IMR-90 (cell line): ENCODE measurements at regions of chr6 and their contacts with region 1.

Region 1: GRCh38 chr6:167282165-167282564 is 8.9 kb upstream of the UNC93A start:
- DNase-seq: no peak
- ATAC-seq: no peak
- H3K4me3 ChIP-seq: no peak overlapping the region
- H3K27ac ChIP-seq: no peak overlapping the region
- H3K4me1 ChIP-seq: no peaks in the 10 kb centered on the region
- H3K27me3 ChIP-seq: no peaks in the 10 kb centered on the region
- CTCF ChIP-seq: no peak
- POLR2A ChIP-seq: no peak
- RAD21 ChIP-seq: no peak

Region 2: DNA sequence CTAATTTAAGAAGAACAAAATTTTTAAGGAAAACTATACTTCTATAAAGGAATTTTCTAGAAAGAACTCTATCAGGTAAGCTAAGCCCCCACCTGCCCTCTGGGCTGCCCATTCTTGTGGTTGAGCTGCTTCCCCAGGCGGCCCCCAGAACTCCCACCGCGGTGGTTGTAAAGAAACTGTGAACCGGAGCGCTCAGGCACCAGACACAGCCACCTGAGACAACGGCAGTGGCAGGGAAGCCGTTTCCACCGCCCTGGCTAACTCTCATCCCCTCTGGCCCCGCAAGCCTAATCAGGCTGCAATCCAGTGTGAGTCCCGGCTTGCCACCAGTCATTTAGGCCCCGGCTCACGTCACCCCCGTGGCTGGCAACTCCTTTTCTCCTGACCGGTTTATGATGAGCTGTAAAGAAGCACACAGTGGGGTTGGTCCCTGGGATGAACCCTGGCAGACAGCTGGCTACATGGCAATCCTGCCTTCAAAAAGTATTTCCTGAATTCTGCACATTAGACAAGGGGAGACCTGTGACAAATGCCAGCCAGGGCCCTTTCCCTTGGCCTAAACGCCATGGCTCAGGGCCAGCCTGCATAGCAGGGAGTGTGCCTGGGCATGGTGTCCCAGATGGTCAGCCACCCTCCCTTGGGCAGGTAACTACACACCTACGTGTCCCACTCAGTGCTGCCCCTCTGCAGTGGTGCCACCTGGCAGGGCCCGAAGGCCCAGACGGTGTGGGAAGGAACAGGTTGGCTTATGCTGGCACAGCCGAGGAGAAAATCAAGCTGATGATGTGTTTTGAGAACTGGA is 60.6 kb before region 1 on chr6:
- CTCF ChIA-PET with region 1: no interaction called
- POLR2A ChIA-PET with region 1: no interaction called
- dilution Hi-C with region 1: no loop called
- in situ Hi-C with region 1: no loop called
- intact Hi-C with region 1: loop called (anchors 2 kb)
- DNase-seq: no peak
- ATAC-seq: no peak
- H3K4me3 ChIP-seq: no peak overlapping the region
- H3K27ac ChIP-seq: no peak overlapping the region
- H3K4me1 ChIP-seq: no peaks in the 10 kb centered on the region
- H3K27me3 ChIP-seq: no peaks in the 10 kb centered on the region
- CTCF ChIP-seq: no peak
- POLR2A ChIP-seq: no peak
- RAD21 ChIP-seq: no peak